ENCODE measurements at regions of chr3 and their contacts with region 1.

Region 1: GRCh38 chr3:138834359-138835212 is at the start of gene PIK3CB:
- DNase-seq: peak; percentile 89
- H3K4me3 Mint-ChIP-seq: peak within 1 kb of the TSS; percentile 98
- H3K27ac Mint-ChIP-seq: peak within 1 kb of the TSS; percentile 99
- H3K4me1 Mint-ChIP-seq: peaks cover 29% of the 10 kb centered on the region
- H3K27me3 Mint-ChIP-seq: no peaks in the 10 kb centered on the region
- total RNA-seq, gene PIK3CB: 19.2 to 20.6 TPM

Region 2: DNA sequence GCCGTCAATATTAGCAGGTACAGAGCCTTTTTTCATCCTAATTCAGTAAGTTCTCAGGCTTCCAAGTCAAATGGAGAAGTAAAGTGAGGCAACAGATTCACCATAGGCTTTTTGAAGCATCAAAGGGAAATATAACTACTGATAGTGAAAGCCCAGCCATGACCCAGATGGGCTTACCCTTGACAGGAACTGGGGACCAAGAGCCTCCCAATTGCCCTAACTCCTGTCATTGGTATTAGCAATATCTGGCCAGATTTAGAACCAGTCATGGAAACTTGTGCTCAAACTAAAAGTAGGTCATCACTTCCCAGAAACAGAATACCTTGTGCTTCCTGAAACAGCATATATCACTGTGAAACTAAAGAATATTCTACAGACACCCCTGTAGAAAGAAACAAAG is 537.9 kb before region 1 on chr3:
- CTCF ChIA-PET with region 1: no interaction called
- intact Hi-C with region 1: loop called (anchors 1 kb)
- DNase-seq: peak; percentile 74
- H3K4me3 Mint-ChIP-seq: peak overlapping the region; percentile 15
- H3K27ac Mint-ChIP-seq: peak overlapping the region; percentile 88
- H3K4me1 Mint-ChIP-seq: peaks cover 38% of the 10 kb centered on the region
- H3K27me3 Mint-ChIP-seq: no peaks in the 10 kb centered on the region

Region 3: DNA sequence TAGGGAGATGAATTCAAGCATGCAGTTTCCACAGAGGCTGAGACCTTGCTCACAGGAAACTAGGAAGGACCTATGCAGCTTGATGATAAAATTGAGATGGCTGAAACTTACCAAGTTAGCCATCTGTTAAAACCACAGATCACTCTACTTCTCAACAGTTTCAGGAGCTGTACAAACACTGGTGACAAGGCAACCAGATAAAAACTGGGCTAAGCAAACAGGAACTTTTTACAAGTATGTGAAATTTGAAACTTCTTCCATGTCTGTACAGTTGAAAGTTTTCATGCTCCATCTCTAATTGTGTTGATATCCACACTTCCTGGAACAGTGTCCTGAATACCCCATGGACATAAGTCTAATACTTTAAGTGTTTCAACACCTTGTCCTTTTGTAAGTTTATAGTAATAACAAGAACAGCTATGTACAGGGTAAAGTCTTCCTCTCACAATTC is 147.8 kb before region 1 on chr3:
- CTCF ChIA-PET with region 1: interaction called, 7 read pairs
- intact Hi-C with region 1: loop called (anchors 1 kb)
- DNase-seq: no peak
- H3K4me3 Mint-ChIP-seq: no peak overlapping the region
- H3K27ac Mint-ChIP-seq: peak overlapping the region; percentile 61
- H3K4me1 Mint-ChIP-seq: peaks cover 15% of the 10 kb centered on the region
- H3K27me3 Mint-ChIP-seq: no peaks in the 10 kb centered on the region

Region 4: DNA sequence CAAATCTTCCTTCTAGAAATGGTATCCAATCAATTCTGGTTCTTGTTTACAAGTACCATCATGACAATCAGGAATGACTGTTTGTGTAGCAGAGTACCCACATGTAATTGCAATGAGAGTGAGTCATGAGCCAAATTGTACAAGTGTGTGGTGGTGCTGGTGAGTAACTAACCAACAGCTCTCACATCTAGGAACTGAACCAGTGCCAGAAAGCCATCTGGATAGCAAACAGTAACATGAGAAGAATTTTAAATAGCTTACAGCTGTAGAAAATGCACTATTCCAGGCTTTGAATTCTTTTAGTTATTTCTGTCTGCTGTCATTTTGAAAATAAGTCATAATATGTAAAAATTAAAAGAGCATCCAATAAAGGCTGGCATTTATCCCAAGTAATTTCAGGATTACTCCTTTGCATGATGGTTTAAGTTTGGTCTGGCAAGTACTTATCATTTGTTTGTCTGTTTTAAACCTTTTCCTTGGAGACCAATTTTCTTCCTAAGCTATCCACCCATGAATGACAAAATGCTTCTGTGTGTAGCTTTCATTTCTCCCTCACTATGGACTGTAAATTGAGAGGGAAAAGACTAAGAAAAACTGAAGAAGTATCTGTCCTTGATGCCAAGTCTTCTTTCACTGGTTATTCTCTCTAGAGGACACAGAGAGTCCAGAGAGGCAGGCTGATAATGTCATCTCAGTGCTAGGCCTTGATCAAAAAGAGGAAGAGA is 59.9 kb before region 1 on chr3:
- CTCF ChIA-PET with region 1: no interaction called
- intact Hi-C with region 1: loop called (anchors 1 kb)
- DNase-seq: peak; percentile 62
- H3K4me3 Mint-ChIP-seq: no peak overlapping the region
- H3K27ac Mint-ChIP-seq: peak overlapping the region; percentile 59
- H3K4me1 Mint-ChIP-seq: peaks cover 42% of the 10 kb centered on the region
- H3K27me3 Mint-ChIP-seq: no peaks in the 10 kb centered on the region

Region 5: GRCh38 chr3:138799822-138800221 is 34.8 kb before region 1 on chr3:
- CTCF ChIA-PET with region 1: no interaction called
- intact Hi-C with region 1: no loop called
- DNase-seq: no peak
- H3K4me3 Mint-ChIP-seq: no peak overlapping the region
- H3K27ac Mint-ChIP-seq: no peak overlapping the region
- H3K4me1 Mint-ChIP-seq: peaks cover 29% of the 10 kb centered on the region
- H3K27me3 Mint-ChIP-seq: no peaks in the 10 kb centered on the region

Region 6: DNA sequence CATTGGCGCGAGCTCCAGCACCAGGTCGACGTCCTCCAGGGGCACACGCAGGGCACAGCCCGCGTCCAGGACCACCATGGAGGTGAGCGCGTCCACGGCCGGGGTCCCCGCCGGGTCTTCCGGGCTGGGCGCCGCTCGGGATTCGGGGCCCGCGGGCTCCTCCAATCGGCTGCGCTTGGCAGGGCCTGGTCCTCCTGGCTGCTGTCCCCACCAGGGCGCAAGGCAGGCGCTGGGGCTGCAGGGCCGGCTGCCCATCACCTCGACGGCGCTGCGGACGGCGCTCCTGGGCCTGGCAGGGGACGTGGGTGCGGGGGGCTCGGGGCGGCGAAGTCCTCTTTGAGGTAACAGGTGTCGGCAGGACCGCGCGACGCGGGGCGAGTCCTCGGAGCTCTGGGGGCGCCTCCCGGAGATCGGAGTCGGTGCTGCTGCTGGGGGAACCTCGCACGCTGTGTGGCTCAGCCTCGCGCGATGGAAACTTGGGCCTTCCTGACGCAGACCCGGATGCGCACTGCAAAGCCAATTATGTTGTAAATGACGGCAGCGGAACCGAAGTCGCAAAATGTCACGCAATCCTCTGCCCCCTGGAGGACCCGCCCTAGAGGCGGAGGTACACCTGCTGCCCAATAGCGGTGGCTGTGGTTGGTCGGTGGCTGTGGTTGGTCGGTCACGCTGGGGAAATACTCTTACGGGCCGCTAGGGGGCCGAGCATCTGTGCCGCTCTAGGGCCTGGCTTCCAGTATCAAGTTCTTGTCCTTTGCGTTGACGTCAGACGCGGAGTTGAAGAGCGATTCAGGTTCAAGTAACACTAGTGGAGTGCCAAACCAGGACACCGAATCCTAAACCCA is 210.0 kb after region 1 on chr3 and contains the start of gene PRR23C:
- CTCF ChIA-PET with region 1: no interaction called
- intact Hi-C with region 1: no loop called
- DNase-seq: no peak
- H3K4me3 Mint-ChIP-seq: no peak within 1 kb of the TSS
- H3K27ac Mint-ChIP-seq: no peak within 1 kb of the TSS
- H3K4me1 Mint-ChIP-seq: no peaks in the 10 kb centered on the region
- H3K27me3 Mint-ChIP-seq: no peaks in the 10 kb centered on the region
- total RNA-seq, gene PRR23C: not detected

Region 7: GRCh38 chr3:139343895-139344856 is 509.6 kb after region 1 on chr3 and contains the start of gene MRPS22:
- CTCF ChIA-PET with region 1: no interaction called
- intact Hi-C with region 1: loop called (anchors 5 kb)
- DNase-seq: peak; percentile 89
- H3K4me3 Mint-ChIP-seq: no peak within 1 kb of the TSS
- H3K27ac Mint-ChIP-seq: no peak within 1 kb of the TSS
- H3K4me1 Mint-ChIP-seq: peaks cover 9% of the 10 kb centered on the region
- H3K27me3 Mint-ChIP-seq: peaks cover 3% of the 10 kb centered on the region
- total RNA-seq, gene MRPS22: 66.8 to 69.1 TPM

Measured in activated naive CD4-positive, alpha-beta T cell treated with anti-CD3 and anti-CD28 coated beads for 36 hours (primary cell).